AG04449 (cell line): ENCODE measurements at regions of chr7 and their contacts with region 1.

Region 1: GRCh38 chr7:55534175-55534915 is 38.0 kb downstream of the VOPP1 start:
- DNase-seq: no peak
- H3K4me3 ChIP-seq: peak overlapping the region; percentile 15
- CTCF ChIP-seq: no peak

Region 2: DNA sequence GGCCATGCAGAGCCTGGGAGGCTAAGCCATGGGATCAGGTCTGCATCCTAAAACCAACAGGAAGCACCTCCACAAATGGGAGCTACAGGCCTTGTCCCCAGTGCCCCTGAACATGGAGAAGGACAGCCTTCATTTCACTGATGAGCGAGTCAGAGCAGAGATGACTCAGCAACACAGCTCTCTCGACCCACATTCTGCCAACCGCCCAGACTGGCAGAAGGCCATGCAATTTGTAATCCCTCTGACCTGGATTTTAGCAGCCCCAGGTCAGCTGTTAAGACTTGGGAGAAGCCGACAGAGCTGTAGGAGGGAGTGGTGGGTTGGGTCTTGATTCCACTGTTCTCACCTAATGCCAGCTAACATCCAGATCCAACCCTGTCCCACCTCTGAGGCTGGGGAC is 12.5 kb after region 1 on chr7:
- CTCF ChIA-PET with region 1: interaction called, 7 read pairs
- POLR2A ChIA-PET with region 1: interaction called, 16 read pairs
- DNase-seq: peak; percentile 47
- H3K4me3 ChIP-seq: no peak overlapping the region
- CTCF ChIP-seq: no peak